ENCODE measurements at regions of chr6 and their contacts with region 1.

Region 1: GRCh38 chr6:1604158-1605030 is 5.3 kb upstream of the FOXC1 start:
- DNase-seq: peak; percentile 70 to 83
- ATAC-seq: peak; percentile 90 to 96 (median 95)
- H3K4me3 ChIP-seq: peak overlapping the region; percentile 68
- H3K27ac ChIP-seq: no peak overlapping the region
- H3K4me1 ChIP-seq: peaks cover 15% of the 10 kb centered on the region
- H3K27me3 ChIP-seq: peaks cover 0 to 76% (median 44%) of the 10 kb centered on the region in 3 donors
- CTCF ChIP-seq: peak; percentile 96

Region 2: DNA sequence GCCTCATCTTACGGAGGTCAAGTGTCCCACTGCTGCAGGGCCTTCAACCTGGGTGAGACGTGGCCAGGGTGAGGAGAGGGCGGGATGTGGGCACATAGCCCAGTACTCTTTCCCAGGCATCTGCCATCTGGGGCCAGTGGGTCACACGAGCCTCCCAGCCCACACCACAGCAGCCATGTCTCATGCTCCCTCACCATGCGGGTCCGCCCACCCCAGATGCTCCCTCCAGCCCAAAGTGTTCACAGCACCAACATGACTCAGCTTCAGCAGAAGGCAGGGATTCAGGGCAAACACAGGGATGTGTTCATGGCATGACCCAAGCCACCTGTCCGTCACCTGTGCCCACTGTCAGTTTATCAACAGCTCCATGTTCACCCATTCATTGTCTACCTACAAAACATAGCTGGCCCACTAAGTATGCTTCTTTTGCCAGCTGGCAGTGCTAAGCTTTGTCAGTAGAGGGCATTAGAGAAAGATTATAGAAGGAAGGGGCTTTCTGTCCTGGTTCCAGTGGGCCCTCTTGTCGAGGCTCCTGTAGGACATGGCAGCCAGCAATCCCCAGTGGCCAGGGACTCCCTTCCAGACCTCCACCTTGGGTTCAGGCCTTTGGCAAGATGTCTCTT is 105.8 kb before region 1 on chr6:
- intact Hi-C with region 1: no loop called
- DNase-seq: no peak
- ATAC-seq: no peak
- H3K4me3 ChIP-seq: no peak overlapping the region
- H3K27ac ChIP-seq: no peak overlapping the region
- H3K4me1 ChIP-seq: no peaks in the 10 kb centered on the region
- H3K27me3 ChIP-seq: no peaks in the 10 kb centered on the region
- CTCF ChIP-seq: no peak

Region 3: DNA sequence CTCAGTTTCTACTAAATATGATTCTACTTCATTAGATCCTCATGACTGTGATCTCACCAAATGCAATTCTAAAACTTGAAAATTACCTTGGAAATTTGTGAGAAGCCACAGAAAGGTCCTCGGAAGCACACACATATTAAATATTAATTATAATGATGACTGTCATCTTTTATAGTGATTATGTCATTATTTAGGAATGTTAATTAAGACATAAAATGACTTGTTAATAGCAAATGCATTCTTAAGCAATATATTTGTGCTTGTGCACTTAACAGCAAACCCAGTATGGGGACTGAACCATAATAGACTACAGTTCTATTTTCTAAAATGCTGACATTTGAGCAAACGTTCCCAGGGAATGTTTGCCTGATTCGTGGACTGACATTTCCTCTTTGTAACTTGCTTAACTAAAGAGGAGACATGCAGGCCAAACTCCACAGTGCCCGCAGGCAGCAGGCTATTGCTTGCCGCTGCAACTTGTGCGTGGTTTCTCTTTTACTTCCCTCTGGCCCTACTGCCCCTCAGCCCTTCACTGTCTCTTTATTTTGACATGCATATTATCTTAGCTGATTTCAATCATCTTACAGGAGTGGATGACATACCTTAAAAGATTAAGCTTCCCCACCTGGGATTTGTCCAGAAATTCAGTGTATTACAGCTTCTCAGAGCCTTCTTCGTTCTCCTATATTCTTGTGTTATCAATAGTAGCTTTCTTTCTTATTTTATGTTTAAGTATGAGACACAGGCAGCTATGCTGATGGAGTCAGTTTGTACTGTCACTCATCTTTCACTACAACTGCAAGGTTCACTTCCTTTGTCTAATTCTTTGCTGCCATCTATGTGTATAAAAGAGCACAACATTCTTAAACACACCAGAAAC is 499.5 kb after region 1 on chr6:
- intact Hi-C with region 1: loop called (anchors 2 to 10 kb)
- DNase-seq: no peak
- ATAC-seq: peak in 1 of 4 donors; percentile 65
- H3K4me3 ChIP-seq: peak overlapping the region; percentile 31
- H3K27ac ChIP-seq: no peak overlapping the region
- H3K4me1 ChIP-seq: peaks cover 7% of the 10 kb centered on the region
- H3K27me3 ChIP-seq: no peaks in the 10 kb centered on the region
- CTCF ChIP-seq: peak; percentile 55

Region 4: GRCh38 chr6:2196079-2196679 is 591.8 kb after region 1 on chr6:
- intact Hi-C with region 1: loop called (anchors 2 to 5 kb)
- DNase-seq: no peak
- ATAC-seq: peak; percentile 56 to 88 (median 64)
- H3K4me3 ChIP-seq: no peak overlapping the region
- H3K27ac ChIP-seq: no peak overlapping the region
- H3K4me1 ChIP-seq: no peaks in the 10 kb centered on the region
- H3K27me3 ChIP-seq: peaks cover 0 to 3% (median 0%) of the 10 kb centered on the region in 3 donors
- CTCF ChIP-seq: peak; percentile 85

Measured in psoas muscle (tissue), 8 donors.